ENCODE measurements at regions of chr9 and their contacts with region 1.

Region 1: GRCh38 chr9:129796029-129796910 is 6.7 kb upstream of the TOR1B start:
- DNase-seq: no peak
- H3K4me3 ChIP-seq: no peak overlapping the region
- H3K27ac ChIP-seq: no peak overlapping the region
- H3K4me1 ChIP-seq: no peaks in the 10 kb centered on the region
- H3K27me3 ChIP-seq: no peaks in the 10 kb centered on the region; the same call in 1 of the 2 replicates
- CTCF ChIP-seq: no peak
- EP300 ChIP-seq: no peak
- RAD21 ChIP-seq: no peak

Region 2: GRCh38 chr9:129712634-129713401 is 83.5 kb before region 1 on chr9:
- CTCF ChIA-PET with region 1: no interaction called
- POLR2A ChIA-PET with region 1: no interaction called
- DNase-seq: no peak
- H3K4me3 ChIP-seq: no peak overlapping the region
- H3K27ac ChIP-seq: no peak overlapping the region
- H3K4me1 ChIP-seq: no peaks in the 10 kb centered on the region; a peak in 1 of 4 replicates
- H3K27me3 ChIP-seq: no peaks in the 10 kb centered on the region; the same call in 1 of the 2 replicates
- CTCF ChIP-seq: no peak
- EP300 ChIP-seq: no peak
- RAD21 ChIP-seq: no peak

Region 3: GRCh38 chr9:129811967-129812363 is 15.7 kb after region 1 on chr9:
- CTCF ChIA-PET with region 1: interaction called, 12 read pairs
- POLR2A ChIA-PET with region 1: no interaction called
- DNase-seq: no peak
- H3K4me3 ChIP-seq: no peak overlapping the region
- H3K27ac ChIP-seq: no peak overlapping the region; a peak in 1 of 4 replicates
- H3K4me1 ChIP-seq: no peaks in the 10 kb centered on the region; a peak in 1 of 4 replicates
- H3K27me3 ChIP-seq: no peaks in the 10 kb centered on the region
- CTCF ChIP-seq: no peak
- EP300 ChIP-seq: no peak
- RAD21 ChIP-seq: no peak

Region 4: GRCh38 chr9:130010151-130010988 is 214.1 kb after region 1 on chr9:
- CTCF ChIA-PET with region 1: no interaction called
- POLR2A ChIA-PET with region 1: no interaction called
- DNase-seq: no peak
- H3K4me3 ChIP-seq: no peak overlapping the region
- H3K27ac ChIP-seq: no peak overlapping the region
- H3K4me1 ChIP-seq: no peaks in the 10 kb centered on the region; a peak in 1 of 4 replicates
- H3K27me3 ChIP-seq: no peaks in the 10 kb centered on the region
- CTCF ChIP-seq: no peak
- EP300 ChIP-seq: no peak
- RAD21 ChIP-seq: no peak